ENCODE measurements at regions of chr2 and their contacts with region 1.

Region 1: GRCh38 chr2:196076778-196077568 is 8.3 kb upstream of the DNAH7 start:
- H3K4me3 ChIP-seq: no peak overlapping the region
- H3K27ac ChIP-seq: no peak overlapping the region
- H3K4me1 ChIP-seq: no peaks in the 10 kb centered on the region
- CTCF ChIP-seq: no peak

Region 2: DNA sequence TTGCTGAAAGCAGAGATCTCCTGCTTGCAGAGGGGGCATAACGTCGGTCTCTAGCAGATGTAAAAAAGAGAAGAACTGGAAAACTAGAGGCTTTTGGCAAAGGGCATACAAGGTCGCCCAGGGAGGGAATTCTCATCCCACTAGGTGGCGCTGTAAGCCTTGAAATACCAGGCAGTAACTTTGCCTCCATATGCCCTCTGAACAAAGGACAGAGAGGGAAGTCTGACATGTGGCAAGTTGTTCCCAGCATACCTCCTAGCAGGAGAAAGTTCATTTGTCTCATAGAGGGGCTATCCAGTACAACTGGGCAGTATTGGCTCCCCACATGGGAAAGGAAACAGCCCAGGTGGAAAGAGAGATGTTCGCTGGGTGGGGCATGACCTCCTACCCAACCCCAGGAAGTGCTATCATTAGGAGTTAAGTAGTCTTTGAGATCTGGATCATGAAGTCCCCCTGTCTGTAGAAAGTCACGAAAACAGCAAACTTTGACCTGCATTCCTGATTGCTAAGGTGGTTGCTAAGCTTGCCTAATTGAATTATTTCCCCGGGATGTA is 54.5 kb after region 1 on chr2:
- CTCF ChIA-PET with region 1: interaction called, 13 read pairs
- POLR2A ChIA-PET with region 1: no interaction called
- H3K4me3 ChIP-seq: no peak overlapping the region
- H3K27ac ChIP-seq: no peak overlapping the region
- H3K4me1 ChIP-seq: no peaks in the 10 kb centered on the region
- CTCF ChIP-seq: peak; percentile 77

Region 3: GRCh38 chr2:196277002-196277401 is 200.0 kb after region 1 on chr2:
- CTCF ChIA-PET with region 1: interaction called, 15 read pairs
- POLR2A ChIA-PET with region 1: no interaction called
- H3K4me3 ChIP-seq: no peak overlapping the region
- H3K27ac ChIP-seq: no peak overlapping the region
- H3K4me1 ChIP-seq: peaks cover 10% of the 10 kb centered on the region
- CTCF ChIP-seq: no peak

Region 4: GRCh38 chr2:196337208-196337953 is 260.4 kb after region 1 on chr2:
- CTCF ChIA-PET with region 1: interaction called, 37 read pairs
- POLR2A ChIA-PET with region 1: no interaction called
- H3K4me3 ChIP-seq: no peak overlapping the region
- H3K27ac ChIP-seq: no peak overlapping the region
- H3K4me1 ChIP-seq: no peaks in the 10 kb centered on the region
- CTCF ChIP-seq: no peak

Region 5: GRCh38 chr2:196370381-196370780 is 293.4 kb after region 1 on chr2:
- CTCF ChIA-PET with region 1: no interaction called
- POLR2A ChIA-PET with region 1: no interaction called
- H3K4me3 ChIP-seq: no peak overlapping the region
- H3K27ac ChIP-seq: no peak overlapping the region
- H3K4me1 ChIP-seq: peaks cover 5% of the 10 kb centered on the region; the same call in 1 of the 2 replicates
- CTCF ChIP-seq: no peak

Region 6: DNA sequence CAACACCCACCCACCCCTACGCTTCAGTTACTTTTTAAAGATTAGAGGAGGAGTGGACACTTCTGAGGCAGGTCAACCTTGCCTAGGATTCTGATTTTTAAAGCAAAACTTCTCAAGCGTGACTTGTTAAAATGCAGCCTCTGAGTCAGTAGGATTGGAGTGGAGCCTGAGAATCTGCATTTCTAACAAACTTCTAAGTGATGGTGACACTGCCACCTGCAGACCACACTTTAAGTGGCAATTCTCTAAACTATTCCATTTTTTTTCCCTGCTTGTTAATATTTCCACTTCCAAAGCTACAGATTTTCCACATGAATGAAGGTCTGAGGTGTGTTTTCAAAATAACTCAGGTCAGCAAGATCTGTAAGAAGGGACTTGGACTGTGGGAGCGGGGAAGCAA is 391.4 kb after region 1 on chr2:
- CTCF ChIA-PET with region 1: no interaction called
- POLR2A ChIA-PET with region 1: no interaction called
- H3K4me3 ChIP-seq: no peak overlapping the region
- H3K27ac ChIP-seq: no peak overlapping the region
- H3K4me1 ChIP-seq: no peaks in the 10 kb centered on the region
- CTCF ChIP-seq: no peak

Region 7: DNA sequence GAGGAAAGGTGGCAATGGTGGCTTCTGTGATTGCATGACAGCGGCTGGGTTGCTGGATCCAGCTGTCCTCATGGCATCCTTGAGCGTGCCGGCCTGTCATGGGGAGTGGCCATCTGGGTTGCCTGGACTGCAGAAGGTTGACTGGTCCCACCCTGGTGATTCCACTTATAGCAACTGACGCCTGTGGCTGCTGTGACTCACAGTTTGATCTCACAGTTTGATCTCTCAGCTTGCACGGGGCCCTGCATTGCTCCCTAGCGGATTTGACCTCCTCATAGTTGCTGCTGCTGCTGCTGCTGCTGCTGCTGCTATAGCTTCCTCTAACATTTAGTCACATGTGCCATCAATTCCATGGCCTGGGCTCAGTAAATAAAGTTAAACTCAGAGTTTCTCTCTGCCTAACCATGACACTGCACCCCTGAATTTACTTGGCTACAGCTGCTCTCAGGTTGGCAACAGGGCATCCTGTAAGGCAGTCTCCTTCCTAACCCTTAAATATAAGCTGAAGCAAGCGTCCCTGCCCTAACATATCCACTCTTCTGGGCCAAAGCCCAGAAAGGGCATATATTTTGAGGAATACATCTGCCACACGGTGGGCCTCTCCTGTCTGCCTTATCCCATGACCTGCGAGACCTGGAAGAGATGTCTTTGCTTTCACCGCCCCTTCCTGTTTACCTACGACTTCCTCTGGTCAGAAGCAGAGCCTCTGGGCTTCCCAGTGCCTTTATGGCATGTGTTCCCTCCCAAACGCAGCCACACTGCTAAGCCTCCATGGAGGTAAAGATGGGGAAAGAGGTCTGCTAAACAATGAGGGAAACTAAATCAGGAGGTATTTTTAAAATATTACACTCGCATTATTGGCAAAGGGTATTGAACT is 524.7 kb after region 1 on chr2:
- CTCF ChIA-PET with region 1: no interaction called
- POLR2A ChIA-PET with region 1: no interaction called
- H3K4me3 ChIP-seq: no peak overlapping the region
- H3K27ac ChIP-seq: no peak overlapping the region
- H3K4me1 ChIP-seq: no peaks in the 10 kb centered on the region
- CTCF ChIP-seq: no peak

Measured in HEK293 (cell line).